OCI-LY7 (cell line): ENCODE measurements at regions of chr12 and their contacts with region 1.

Region 1: DNA sequence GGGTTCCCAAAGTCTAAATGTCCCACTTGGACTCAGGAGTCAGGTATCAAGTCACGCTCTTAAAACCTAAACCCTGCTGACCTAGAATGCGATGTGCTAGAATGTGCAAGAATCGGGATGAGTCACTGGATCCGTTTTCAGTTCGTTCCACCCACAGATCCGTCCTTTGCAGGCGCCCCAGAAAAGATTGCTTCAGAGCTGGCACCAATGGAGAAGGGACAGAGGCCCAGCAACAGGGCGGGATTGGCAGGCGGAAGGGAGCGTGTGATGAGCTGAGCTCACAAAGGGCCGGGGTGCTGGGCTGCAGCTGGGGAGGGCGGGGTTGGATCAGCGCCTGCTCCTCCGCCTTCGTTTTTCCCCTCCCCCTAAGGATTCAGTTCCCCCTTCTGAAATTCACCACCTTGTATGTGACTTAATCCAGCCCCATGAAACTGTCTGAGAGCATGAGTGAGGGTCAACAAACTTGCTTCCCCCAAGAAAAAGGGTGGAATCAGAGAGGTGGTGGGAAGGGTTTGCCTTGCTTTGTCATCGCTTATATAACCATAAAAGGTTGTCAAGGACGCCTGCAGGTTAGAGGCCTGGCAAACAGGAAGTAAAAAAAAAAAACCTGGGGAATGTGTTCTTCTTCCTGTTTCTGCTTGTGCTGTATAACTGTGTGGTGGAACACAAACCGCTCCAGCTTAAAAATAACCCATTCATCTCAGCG is 2.8 kb upstream of the UBC start:
- DNase-seq: peak; percentile 95
- H3K4me3 ChIP-seq: peak overlapping the region; percentile 86
- H3K27ac ChIP-seq: peak overlapping the region; percentile 96
- H3K4me1 ChIP-seq: peaks cover 73% of the 10 kb centered on the region
- CTCF ChIP-seq: no peak

Region 2: DNA sequence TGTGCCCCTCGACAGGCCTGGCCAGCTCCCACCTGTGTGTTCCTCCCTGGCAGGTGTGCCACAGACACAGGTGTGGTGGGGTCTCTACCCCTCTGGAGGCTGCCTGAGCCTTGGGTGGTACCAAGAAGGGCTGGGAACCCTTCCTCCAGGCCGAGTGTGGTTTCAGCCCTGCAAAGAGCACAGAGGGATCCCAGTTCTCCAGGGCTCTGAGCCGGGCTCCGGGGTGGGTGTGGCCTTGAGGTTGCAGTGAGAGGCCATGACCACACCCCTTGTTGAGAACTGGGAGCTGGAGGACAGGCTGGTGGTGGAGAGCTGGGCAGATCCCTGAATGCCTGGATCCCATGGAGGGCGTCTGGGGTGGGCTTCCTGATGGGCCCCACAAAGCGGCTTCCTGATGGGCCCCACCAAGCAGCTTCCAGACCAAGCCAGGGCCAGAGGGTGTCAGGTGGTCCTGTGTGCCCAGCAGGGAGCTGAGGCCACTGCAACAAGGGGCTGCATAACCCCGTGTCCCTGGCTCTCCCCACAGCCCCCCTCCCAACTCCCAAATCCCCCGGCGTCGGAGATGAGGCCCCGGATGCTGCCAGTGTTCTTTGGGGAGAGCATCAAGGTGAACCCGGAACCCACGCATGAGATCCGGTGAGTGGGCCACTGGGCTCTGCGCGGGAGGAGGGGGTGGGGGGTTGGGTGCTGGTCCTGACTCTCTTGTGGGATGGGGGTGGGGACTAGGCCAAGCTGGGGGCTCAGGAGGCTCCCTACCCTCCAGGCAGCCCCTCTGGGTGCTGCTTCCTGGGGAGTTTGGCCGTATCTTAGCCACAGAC is 605.8 kb before region 1 on chr12:
- CTCF ChIA-PET with region 1: no interaction called
- POLR2A ChIA-PET with region 1: no interaction called
- intact Hi-C with region 1: no loop called
- DNase-seq: no peak
- H3K4me3 ChIP-seq: no peak overlapping the region
- H3K27ac ChIP-seq: no peak overlapping the region
- H3K4me1 ChIP-seq: no peaks in the 10 kb centered on the region
- CTCF ChIP-seq: no peak

Region 3: GRCh38 chr12:124609041-124609995 is 308.0 kb before region 1 on chr12:
- CTCF ChIA-PET with region 1: no interaction called
- POLR2A ChIA-PET with region 1: no interaction called
- intact Hi-C with region 1: loop called (anchors 5 kb)
- DNase-seq: peak; percentile 96
- H3K4me3 ChIP-seq: peak overlapping the region; percentile 48
- H3K27ac ChIP-seq: peak overlapping the region; percentile 89
- H3K4me1 ChIP-seq: peaks cover 39% of the 10 kb centered on the region
- CTCF ChIP-seq: peak; percentile 24; the same call in 1 of the 2 replicates

Region 4: GRCh38 chr12:124884587-124885438 is 32.5 kb before region 1 on chr12:
- CTCF ChIA-PET with region 1: interaction called, 3 read pairs
- POLR2A ChIA-PET with region 1: interaction called, 29 read pairs
- intact Hi-C with region 1: loop called (anchors 2 kb)
- DNase-seq: peak; percentile 99
- H3K4me3 ChIP-seq: peak overlapping the region; percentile 50
- H3K27ac ChIP-seq: peak overlapping the region; percentile 95
- H3K4me1 ChIP-seq: peaks cover 75% of the 10 kb centered on the region
- CTCF ChIP-seq: peak; percentile 43

Region 5: GRCh38 chr12:124906606-124907261 is 10.6 kb before region 1 on chr12:
- CTCF ChIA-PET with region 1: interaction called, 10 read pairs
- POLR2A ChIA-PET with region 1: interaction called, 66 read pairs
- intact Hi-C with region 1: no loop called
- DNase-seq: peak; percentile 96
- H3K4me3 ChIP-seq: peak overlapping the region; percentile 6
- H3K27ac ChIP-seq: peak overlapping the region; percentile 23
- H3K4me1 ChIP-seq: peaks cover 65% of the 10 kb centered on the region
- CTCF ChIP-seq: peak; percentile 100

Region 6: DNA sequence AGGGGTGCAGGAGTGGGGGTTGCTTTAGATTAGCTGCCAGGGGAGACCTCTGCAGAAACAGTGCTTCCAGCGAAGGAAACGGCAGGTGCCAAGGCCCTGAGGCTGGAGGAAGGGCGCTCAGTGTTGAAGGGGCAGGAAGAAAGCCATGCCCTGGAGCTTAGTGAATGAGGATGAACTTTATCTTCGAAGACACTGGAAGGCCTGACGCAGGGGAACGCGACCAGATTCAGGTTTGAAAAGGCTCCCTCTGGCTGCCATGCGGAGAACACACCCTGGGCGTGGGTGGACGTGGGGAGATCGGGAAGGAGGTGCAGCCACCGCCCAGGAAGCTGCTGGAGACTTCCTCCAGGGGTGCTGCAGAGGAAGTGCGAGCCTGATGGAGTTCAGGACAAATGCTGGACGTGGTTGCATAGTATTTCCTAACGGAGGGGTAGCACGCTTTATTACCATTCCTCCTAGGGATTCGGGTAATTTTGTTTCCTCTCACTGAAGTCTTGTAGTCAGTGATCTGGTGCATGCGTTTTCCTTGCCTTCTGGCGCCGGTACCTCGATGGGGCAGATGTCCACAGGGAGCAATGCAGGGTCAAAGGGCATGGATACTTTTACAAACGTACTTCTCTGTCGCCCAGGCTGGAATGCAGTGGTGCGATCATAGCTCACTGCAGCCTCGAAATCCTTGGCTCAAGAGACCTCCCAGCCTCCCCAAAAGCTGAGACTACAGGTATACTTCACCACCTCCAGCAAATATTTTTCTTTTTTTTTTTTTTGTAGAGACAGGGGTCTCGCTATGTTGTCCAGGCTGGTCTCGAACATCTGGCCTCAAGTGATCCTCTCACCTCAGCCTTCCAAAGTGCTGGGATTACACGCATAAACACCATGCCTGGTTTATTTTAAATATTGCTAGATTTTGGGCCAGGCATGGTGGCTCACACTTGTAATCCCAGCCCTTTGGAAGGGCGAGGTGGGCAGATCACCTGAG is 23.6 kb after region 1 on chr12:
- CTCF ChIA-PET with region 1: interaction called, 8 read pairs
- POLR2A ChIA-PET with region 1: interaction called, 167 read pairs
- intact Hi-C with region 1: loop called (anchors 1 kb)
- DNase-seq: peak; percentile 90
- H3K4me3 ChIP-seq: peak overlapping the region; percentile 72
- H3K27ac ChIP-seq: peak overlapping the region; percentile 88
- H3K4me1 ChIP-seq: peaks cover 29% of the 10 kb centered on the region
- CTCF ChIP-seq: peak; percentile 92

Region 7: DNA sequence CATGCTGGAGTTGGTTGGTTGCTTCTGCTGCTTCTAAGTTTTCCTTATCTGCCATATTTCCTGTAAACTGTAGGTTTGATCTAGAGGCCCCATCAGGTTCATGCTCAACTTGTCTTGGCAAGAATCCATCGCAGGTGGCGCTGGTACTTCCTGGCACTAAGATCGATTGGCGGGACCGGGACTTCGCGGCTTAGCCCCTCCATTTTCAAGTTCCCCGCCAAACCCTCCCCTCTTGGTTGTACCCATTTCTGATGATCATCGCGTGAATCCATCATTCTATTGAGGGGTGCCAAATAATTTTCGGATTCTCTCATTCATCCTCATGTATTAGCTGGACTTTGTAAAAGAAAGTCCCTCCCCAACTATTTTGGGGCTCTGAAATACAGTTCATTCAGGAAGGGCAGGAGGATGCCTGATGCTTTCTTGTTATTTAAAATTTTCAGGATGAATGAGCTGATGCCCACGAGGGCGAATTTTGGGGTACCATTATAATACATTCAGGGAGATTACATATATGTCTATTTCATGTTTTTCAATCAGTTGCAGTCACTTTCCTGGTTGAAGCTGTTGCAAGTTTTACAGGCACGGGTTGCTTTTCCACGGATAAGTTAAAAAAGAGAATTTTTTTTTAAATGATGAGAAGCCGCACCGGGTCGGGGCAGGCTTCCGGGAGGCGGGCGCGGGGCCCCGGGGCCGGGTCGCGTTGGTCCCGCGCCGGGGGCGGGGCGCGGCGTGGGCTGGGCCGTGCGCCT is 75.8 kb after region 1 on chr12:
- CTCF ChIA-PET with region 1: no interaction called
- POLR2A ChIA-PET with region 1: interaction called, 4 read pairs
- intact Hi-C with region 1: loop called (anchors 2 kb)
- DNase-seq: peak; percentile 95
- H3K4me3 ChIP-seq: peak overlapping the region; percentile 87
- H3K27ac ChIP-seq: peak overlapping the region; percentile 96
- H3K4me1 ChIP-seq: peaks cover 41% of the 10 kb centered on the region
- CTCF ChIP-seq: peak; percentile 91

Region 8: DNA sequence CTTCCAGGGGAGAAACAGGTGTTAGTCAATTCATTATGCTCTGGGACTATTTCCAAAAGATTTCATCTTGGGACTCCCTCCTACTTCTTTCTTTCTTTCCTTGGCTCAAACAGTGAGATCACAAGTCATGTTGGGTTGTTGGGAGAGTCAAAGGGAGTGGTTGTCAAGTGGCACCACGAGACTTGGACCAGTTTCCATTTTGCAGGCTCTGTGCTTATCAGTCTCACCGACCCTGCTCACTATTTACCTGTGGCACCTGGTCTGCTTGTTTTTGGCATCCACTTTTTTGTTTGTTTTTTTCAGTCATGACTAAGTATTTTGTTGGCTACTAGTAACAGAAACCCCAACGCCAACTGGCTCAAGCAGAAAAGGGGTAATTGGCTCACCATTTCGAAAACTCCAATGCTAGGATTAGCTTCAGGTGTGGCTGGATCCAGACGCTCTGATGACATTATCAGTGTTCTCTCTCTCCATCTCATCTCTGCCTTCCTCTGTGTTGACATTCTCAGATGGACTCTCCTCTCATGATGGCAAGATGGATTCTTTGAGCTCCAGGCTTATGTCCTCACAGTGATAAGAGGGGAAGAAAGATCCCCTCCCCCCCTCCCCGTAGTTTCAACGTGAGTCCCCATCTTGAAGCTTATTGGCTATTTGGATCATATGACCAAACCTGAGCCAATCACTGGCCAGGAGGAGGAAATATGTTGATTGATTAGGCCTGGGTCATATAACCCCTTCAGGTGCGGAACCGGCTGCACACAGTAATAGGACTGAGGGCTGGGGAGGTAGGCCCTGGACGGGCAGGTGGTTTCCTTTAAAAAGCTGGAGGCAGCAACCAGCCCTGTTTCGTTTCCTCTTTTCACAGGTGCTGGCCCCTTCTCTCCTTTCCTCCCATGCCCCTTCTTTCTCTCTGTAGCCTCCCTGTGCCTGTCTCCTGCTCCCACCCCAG is 232.1 kb after region 1 on chr12:
- CTCF ChIA-PET with region 1: no interaction called
- POLR2A ChIA-PET with region 1: interaction called, 6 read pairs
- intact Hi-C with region 1: loop called (anchors 1 kb)
- DNase-seq: peak; percentile 99
- H3K4me3 ChIP-seq: peak overlapping the region; percentile 92
- H3K27ac ChIP-seq: peak overlapping the region; percentile 98
- H3K4me1 ChIP-seq: peaks cover 45% of the 10 kb centered on the region
- CTCF ChIP-seq: no peak

Region 9: DNA sequence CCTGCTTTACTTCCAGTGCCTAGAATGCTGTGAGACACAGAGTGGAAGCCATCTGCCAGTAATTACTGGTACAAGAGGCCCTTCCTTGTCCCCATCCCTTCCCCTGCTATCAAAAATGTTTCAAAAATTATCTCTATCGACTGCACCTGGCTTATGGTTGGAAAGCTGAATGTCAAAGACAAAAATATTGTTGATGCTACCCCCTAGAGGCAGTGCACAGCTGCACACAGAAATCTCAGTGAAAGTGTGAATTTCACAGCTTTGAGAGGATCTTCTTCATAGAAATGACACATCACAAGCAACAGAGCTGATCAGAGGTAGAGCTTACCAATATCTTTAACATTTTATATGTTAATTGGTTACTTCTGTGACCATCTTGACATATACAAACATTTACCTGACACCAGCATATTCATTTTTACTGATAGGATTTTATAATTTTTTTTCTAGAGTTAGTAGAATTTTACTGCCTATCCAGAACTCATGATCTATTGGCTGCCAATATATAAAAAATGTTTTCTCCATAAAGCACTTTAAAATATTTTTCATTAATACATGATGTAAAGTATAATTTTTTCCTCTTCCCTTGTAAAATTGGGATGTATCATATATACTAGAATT is 286.0 kb after region 1 on chr12:
- CTCF ChIA-PET with region 1: no interaction called
- POLR2A ChIA-PET with region 1: no interaction called
- intact Hi-C with region 1: no loop called
- DNase-seq: peak; percentile 75
- H3K4me3 ChIP-seq: no peak overlapping the region
- H3K27ac ChIP-seq: no peak overlapping the region
- H3K4me1 ChIP-seq: peaks cover 17% of the 10 kb centered on the region
- CTCF ChIP-seq: peak; percentile 93